Activated T-helper 2 cell treated with anti-CD3 and anti-CD28 coated beads, Interferon-gamma antibody, Interleukin-2, Interleukin-4, amounts not matched to agents 10 μg/mL and 5 μg/mL and 100 μg/mL, durations not matched to agents 14 hours and 24 hours and 36 hours (primary cell): ENCODE measurements at regions of chr14 and their contacts with region 1.

Region 1: GRCh38 chr14:89720741-89721315 is 233.7 kb downstream of the EFCAB11 start:
- DNase-seq: peak; percentile 67
- H3K4me3 Mint-ChIP-seq: peak overlapping the region; percentile 54
- H3K27ac Mint-ChIP-seq: peak overlapping the region; percentile 96
- H3K4me1 Mint-ChIP-seq: peaks cover 64% of the 10 kb centered on the region
- H3K27me3 Mint-ChIP-seq: no peaks in the 10 kb centered on the region

Region 2: GRCh38 chr14:89564286-89564957 is 156.4 kb before region 1 on chr14:
- intact Hi-C with region 1: no loop called
- DNase-seq: no peak
- H3K4me3 Mint-ChIP-seq: no peak overlapping the region
- H3K27ac Mint-ChIP-seq: no peak overlapping the region
- H3K4me1 Mint-ChIP-seq: peaks cover 20% of the 10 kb centered on the region
- H3K27me3 Mint-ChIP-seq: no peaks in the 10 kb centered on the region

Region 3: DNA sequence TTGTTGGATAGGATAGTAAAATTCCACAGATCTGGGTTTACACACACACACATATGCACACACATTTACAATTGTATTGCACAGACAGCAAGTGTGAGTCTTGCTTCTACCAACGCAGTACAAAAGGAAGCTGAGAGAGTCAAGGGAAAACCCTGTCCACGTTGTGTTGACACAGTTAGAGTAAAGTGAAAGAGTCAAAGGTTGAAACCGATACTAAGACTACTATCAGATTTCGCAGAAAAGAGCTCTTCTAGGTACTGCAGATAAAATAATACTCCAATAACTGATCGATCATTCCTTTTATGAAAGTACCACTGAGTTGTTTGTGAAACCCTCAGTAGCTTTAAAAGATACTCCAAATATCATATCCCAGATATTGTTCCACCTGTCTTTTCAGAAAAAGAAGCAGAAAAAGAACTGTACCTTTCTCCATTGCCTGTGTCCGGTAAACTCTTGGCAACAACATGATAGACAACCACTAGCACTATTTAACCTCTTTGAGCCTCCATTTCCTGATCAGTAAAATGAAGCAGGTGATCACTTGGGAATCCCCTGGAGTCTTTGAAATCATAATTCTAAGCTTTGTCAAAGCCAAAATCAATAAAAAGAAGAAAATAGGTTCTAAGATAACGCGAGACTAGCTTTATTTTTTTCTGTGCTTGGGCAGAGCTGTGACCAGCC is 79.2 kb before region 1 on chr14:
- intact Hi-C with region 1: loop called (anchors 1 kb)
- DNase-seq: peak; percentile 42
- H3K4me3 Mint-ChIP-seq: peak overlapping the region; percentile 50
- H3K27ac Mint-ChIP-seq: peak overlapping the region; percentile 93
- H3K4me1 Mint-ChIP-seq: peaks cover 65% of the 10 kb centered on the region
- H3K27me3 Mint-ChIP-seq: no peaks in the 10 kb centered on the region

Region 4: GRCh38 chr14:89701211-89702043 is 19.4 kb before region 1 on chr14:
- intact Hi-C with region 1: loop called (anchors 1 kb)
- DNase-seq: peak; percentile 81
- H3K4me3 Mint-ChIP-seq: peak overlapping the region; percentile 57
- H3K27ac Mint-ChIP-seq: peak overlapping the region; percentile 79
- H3K4me1 Mint-ChIP-seq: peaks cover 43% of the 10 kb centered on the region
- H3K27me3 Mint-ChIP-seq: no peaks in the 10 kb centered on the region

Region 5: GRCh38 chr14:89707086-89707485 is 13.7 kb before region 1 on chr14:
- intact Hi-C with region 1: loop called (anchors 2 kb)
- DNase-seq: no peak
- H3K4me3 Mint-ChIP-seq: no peak overlapping the region
- H3K27ac Mint-ChIP-seq: no peak overlapping the region
- H3K4me1 Mint-ChIP-seq: peaks cover 29% of the 10 kb centered on the region
- H3K27me3 Mint-ChIP-seq: no peaks in the 10 kb centered on the region

Region 6: GRCh38 chr14:89767861-89768268 is 47.0 kb after region 1 on chr14:
- intact Hi-C with region 1: loop called (anchors 1 kb)
- DNase-seq: peak; percentile 60
- H3K4me3 Mint-ChIP-seq: no peak overlapping the region
- H3K27ac Mint-ChIP-seq: peak overlapping the region; percentile 82
- H3K4me1 Mint-ChIP-seq: peaks cover 24% of the 10 kb centered on the region
- H3K27me3 Mint-ChIP-seq: peaks cover 6% of the 10 kb centered on the region